ENCODE measurements at regions of chr5 and their contacts with region 1.

Region 1: DNA sequence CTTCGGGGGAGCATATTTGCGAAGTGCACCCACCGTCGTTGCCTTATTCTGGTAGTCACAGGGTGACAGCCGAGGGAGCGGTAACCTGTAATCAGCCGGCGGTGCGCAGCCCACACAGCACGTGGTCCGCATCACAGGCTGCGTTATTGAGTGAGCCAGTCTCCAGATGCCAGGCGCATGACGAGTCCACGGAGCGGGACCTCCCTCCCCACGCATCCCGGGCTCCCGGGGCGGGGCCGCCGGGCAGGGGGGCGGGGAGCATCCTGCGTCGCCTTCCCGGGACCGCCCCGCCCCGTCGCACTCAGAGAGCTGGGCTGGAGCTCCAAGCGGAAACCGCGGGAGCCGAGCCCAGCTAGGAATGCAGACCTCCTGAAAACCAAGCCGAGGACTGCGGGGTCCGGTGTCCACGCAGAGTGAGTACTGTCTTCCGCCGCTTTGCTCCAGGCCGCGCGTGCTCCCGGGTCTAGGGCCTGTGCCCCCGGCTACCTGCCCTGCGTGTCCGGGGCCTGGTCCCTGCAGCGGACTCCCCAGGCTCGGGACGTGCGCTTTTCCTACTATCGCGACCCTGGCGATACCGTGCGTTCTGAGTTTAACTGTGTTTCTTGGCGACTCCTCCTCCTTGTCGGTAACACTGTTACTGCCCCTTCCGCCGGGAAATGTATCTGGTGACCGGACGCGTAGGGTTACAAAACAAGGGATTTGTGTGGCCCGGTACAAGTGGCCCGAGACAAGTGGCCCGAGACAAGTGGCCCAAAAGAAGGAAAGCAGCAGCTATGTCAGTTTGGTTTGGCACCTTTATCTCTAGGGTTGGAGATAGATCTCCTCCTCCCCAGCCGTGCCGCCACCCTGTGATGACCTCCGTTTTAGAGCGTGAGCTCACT is 40.6 kb downstream of the CAST start:
- DNase-seq: peak; percentile 92
- H3K4me3 Mint-ChIP-seq: peak overlapping the region; percentile 84
- H3K27ac Mint-ChIP-seq: peak overlapping the region; percentile 85
- H3K4me1 Mint-ChIP-seq: peaks cover 52% of the 10 kb centered on the region
- H3K27me3 Mint-ChIP-seq: no peaks in the 10 kb centered on the region

Region 2: DNA sequence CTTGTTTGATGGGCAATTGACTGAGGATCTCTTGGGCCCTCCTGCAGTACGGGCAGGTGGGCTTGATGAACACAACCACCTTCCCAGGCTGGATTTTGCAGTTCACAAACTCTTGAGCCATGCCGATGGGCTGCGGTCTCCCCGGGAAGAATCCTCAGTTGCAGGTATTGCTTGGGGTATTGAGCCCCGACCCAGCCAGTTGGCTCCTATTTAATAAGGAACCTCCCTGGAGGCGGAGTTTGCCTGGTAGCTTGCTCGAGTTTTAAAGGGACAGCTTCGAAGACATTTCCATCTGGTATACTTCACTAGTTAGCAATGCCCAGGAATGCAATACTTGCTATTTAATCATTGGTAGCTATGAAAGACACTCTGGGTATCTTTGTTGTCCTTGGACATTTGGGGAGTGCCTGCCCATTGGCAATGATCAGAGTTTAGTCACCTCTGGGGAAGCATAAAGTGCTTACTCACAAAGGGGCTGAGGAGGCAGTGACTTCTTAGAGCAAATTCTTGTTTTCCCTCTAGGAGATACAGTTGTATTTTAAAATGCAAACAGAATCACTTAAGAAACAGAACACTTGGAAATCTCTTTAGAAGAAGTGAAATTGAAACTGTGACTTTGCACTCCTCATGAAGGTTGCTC is 880.1 kb before region 1 on chr5 and contains the start of gene GLRX:
- CTCF ChIA-PET with region 1: no interaction called
- POLR2A ChIA-PET with region 1: no interaction called
- intact Hi-C with region 1: loop called (anchors 1 kb)
- DNase-seq: peak; percentile 61
- H3K4me3 Mint-ChIP-seq: peak within 1 kb of the TSS; percentile 94
- H3K27ac Mint-ChIP-seq: peak within 1 kb of the TSS; percentile 90
- H3K4me1 Mint-ChIP-seq: peaks cover 65% of the 10 kb centered on the region
- H3K27me3 Mint-ChIP-seq: no peaks in the 10 kb centered on the region
- total RNA-seq, gene GLRX: 33.2 to 34.0 TPM

Region 3: GRCh38 chr5:96716007-96716406 is 13.3 kb after region 1 on chr5:
- CTCF ChIA-PET with region 1: interaction called, 5 read pairs
- POLR2A ChIA-PET with region 1: interaction called, 3 read pairs
- intact Hi-C with region 1: loop called (anchors 1 kb)
- DNase-seq: no peak
- H3K4me3 Mint-ChIP-seq: no peak overlapping the region
- H3K27ac Mint-ChIP-seq: no peak overlapping the region
- H3K4me1 Mint-ChIP-seq: peaks cover 48% of the 10 kb centered on the region
- H3K27me3 Mint-ChIP-seq: no peaks in the 10 kb centered on the region

Region 4: GRCh38 chr5:96876292-96876850 is 173.6 kb after region 1 on chr5 and contains the start of gene ERAP2:
- CTCF ChIA-PET with region 1: no interaction called
- POLR2A ChIA-PET with region 1: no interaction called
- intact Hi-C with region 1: loop called (anchors 5 kb)
- DNase-seq: peak; percentile 30
- H3K4me3 Mint-ChIP-seq: peak within 1 kb of the TSS; percentile 96
- H3K27ac Mint-ChIP-seq: peak within 1 kb of the TSS; percentile 97
- H3K4me1 Mint-ChIP-seq: peaks cover 63% of the 10 kb centered on the region
- H3K27me3 Mint-ChIP-seq: no peaks in the 10 kb centered on the region
- total RNA-seq, gene ERAP2: 44.8 to 48.9 TPM

Region 5: GRCh38 chr5:97183100-97183929 is 480.6 kb after region 1 on chr5 and contains the start of gene RIOK2:
- CTCF ChIA-PET with region 1: no interaction called
- POLR2A ChIA-PET with region 1: no interaction called
- intact Hi-C with region 1: loop called (anchors 1 kb)
- DNase-seq: peak; percentile 96
- H3K4me3 Mint-ChIP-seq: peak within 1 kb of the TSS; percentile 87
- H3K27ac Mint-ChIP-seq: peak within 1 kb of the TSS; percentile 98
- H3K4me1 Mint-ChIP-seq: peaks cover 34% of the 10 kb centered on the region
- H3K27me3 Mint-ChIP-seq: no peaks in the 10 kb centered on the region
- total RNA-seq, gene RIOK2: 31.8 to 41.5 TPM